Right ventricle myocardium inferior (tissue), 1 donor: ENCODE measurements at regions of chr20 and their contacts with region 1.

Region 1: DNA sequence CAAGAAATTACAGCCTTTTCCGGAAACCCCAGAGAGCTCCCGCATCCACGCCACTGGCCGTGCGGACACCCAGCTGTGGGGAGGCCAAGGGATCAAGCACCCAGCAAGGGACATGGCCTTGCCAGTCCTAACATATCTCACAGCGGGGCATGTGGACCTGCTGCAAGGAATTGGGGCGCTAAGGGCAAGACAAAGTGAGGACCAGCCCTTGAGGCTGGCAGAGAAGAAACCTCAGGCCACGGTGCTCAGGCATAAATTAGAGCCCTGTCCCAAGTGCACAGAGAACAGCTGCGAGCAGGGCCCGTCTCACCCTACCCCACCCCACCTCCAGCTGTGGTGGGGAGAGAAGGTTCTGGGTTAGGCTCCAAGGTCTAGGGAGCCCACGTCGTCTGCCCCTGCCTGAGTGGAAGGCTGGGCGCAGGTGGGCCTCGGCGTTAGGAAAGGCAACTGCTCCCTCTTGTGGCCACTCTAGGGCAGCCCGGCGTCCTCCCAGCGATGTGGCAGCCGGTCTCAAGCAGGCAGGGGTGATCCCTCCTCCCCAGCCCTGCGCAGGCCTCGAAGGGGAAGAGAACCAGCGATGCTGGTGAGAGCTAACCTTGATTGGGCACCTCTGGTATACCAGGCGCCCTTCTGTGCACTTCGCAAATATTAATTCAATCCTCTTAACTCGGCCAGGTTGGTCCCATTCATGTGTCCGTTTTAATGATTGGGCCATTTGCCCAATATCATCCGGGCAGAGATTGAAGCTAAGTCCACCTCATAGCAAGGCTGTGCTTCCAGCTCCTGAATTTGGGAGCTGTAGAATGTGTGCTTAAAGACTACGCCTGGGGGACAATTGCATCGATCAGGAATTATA is 235.8 kb downstream of the NFATC2 start:
- DNase-seq: peak; percentile 79
- ATAC-seq: peak; percentile 88

Region 2: GRCh38 chr20:50790651-50791277 is 516.0 kb before region 1 on chr20:
- intact Hi-C with region 1: loop called (anchors 5 kb)
- DNase-seq: peak; percentile 93
- ATAC-seq: peak; percentile 87

Region 3: DNA sequence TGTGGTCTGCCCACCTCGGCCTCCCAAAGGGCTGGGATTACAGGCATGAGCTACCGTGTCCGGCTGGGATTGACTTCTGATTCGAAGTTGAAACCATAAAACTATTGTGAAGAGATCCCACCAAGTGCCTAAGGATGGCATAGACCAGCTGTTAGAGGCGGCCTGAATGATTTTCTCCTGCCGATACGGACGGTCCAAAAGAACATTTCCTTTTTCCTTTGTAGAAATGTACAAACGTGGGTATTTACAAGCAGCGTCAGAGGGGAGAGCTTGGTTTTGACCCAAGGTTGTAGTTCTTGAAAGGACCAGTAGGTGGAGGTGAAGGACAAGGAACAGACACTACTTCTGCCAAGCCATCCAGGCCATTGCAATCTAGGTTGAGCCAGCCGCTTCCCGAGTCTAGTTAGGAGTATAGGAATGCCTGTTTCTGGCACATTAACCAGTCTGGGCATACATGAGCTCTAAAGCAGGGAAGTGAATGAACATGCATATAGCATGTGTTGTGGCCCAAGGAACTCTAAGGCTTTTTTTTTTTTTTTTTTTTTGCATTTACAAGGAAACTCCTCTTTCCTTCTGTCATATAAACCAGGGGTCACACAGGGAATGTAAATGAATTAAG is 319.0 kb before region 1 on chr20:
- intact Hi-C with region 1: loop called (anchors 1 kb)
- DNase-seq: no peak
- ATAC-seq: peak; percentile 88

Region 4: GRCh38 chr20:51220293-51220706 is 86.4 kb before region 1 on chr20:
- intact Hi-C with region 1: loop called (anchors 5 kb)
- DNase-seq: no peak
- ATAC-seq: no peak